Activated B cell treated with CpG ODN at 0.5 μM for 24 hours (primary cell): ENCODE measurements at regions of chr12 and their contacts with region 1.

Region 1: DNA sequence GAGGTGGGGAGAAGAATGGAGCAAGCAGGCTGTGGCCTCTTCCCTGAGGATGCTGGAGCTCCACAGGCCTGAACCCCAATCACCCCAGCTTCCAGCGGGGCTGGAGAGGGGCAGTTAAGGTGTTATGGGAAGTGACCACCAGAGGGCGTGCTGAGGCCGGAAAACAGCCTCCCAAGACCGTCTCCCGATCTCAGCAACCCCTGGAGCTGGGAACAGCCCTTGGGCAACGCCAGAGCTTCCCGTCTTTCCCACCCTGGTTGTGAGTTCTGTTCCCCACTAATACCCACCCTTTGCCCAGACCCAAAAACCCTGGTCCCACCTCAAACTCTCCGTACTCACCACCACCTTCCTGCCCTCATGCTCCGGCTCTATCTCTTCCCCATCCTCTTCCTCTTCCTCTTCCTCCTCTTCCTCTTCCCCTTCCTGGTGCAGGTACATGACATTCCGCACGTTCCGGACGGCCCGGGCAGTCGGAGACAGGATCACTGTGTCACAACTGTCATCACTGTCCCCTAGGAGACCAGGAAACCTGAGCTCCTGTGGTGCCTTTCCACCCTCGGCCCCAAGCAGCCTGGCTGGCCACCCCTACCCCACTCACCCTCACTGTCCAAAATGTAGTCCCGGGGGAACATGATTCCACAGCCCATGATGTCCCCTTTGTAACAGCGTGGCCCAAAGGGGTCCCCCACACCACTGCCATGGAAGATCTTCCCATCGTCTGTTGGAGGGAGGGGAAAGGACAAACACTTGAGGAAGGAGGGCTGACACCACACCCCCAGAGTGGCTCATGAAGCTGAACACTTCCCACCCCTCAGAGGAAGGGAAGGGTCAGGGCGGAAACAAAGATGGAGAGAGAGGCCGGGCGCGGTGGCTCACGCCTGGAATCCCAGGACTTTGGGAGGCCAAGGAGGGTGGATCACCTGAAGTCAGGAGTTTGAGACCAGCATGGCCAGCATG is 12.9 kb downstream of the SPRYD3 start:
- DNase-seq: peak; percentile 55
- ATAC-seq: peak; percentile 63
- H3K4me3 Mint-ChIP-seq: no peak overlapping the region
- H3K27ac Mint-ChIP-seq: no peak overlapping the region
- H3K4me1 Mint-ChIP-seq: peaks cover 10% of the 10 kb centered on the region
- H3K27me3 Mint-ChIP-seq: no peaks in the 10 kb centered on the region
- CTCF ChIP-seq: no peak

Region 2: GRCh38 chr12:53054112-53054833 is 12.0 kb before region 1 on chr12:
- CTCF ChIA-PET with region 1: interaction called, 11 read pairs
- POLR2A ChIA-PET with region 1: interaction called, 3 read pairs
- intact Hi-C with region 1: loop called (anchors 2 kb)
- DNase-seq: peak; percentile 86
- ATAC-seq: peak; percentile 97
- H3K4me3 Mint-ChIP-seq: peak overlapping the region; percentile 95
- H3K27ac Mint-ChIP-seq: peak overlapping the region; percentile 90
- H3K4me1 Mint-ChIP-seq: peaks cover 12% of the 10 kb centered on the region
- H3K27me3 Mint-ChIP-seq: peaks cover 6% of the 10 kb centered on the region
- CTCF ChIP-seq: no peak

Region 3: DNA sequence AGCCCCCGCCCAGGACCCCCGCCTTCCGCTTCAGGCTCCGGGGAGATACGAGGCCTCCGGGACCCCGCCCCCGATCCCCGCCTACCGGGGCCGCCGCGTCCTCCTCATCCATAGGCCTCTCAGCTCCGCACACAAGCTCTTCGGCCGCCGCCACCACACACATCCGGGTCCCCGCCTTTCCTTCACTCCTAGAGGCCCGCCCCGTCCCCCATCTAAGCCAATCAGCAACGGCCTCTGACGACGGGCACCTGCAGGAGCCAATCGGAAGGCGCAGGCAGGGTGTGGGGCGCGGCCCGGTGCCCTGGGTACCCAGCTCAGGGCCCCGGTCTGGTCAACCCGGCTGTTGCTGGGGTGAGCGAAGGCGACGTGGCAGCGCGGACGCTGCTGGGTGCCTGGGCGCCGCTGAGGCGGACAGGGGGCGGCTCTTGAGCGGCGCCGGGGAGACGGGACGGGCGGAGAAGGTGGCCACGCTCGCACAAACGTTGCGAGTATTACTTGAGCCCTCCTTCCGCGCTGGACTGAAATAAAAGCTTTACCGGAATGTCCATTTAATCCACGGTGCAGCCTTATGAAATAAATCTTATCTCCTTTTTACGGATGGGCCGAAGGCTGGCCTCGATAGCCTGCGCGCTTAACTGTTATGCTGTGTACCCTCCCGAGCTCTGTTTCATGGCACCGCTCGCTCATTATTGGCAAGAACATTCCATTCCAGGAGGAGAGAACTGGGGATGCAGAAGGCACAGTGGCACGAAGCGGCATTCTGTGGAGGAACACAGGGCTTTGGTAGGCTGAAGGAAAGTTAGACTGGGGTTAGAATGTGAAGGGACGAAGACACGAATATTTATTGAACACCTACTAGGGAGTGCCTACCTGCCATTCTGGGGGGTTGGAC is 13.2 kb after region 1 on chr12 and contains the start of gene SPRYD3:
- CTCF ChIA-PET with region 1: interaction called, 77 read pairs
- POLR2A ChIA-PET with region 1: interaction called, 7 read pairs
- intact Hi-C with region 1: no loop called
- DNase-seq: peak; percentile 98
- ATAC-seq: peak; percentile 98
- H3K4me3 Mint-ChIP-seq: peak within 1 kb of the TSS; percentile 92
- H3K27ac Mint-ChIP-seq: peak within 1 kb of the TSS; percentile 87
- H3K4me1 Mint-ChIP-seq: peaks cover 31% of the 10 kb centered on the region
- H3K27me3 Mint-ChIP-seq: no peaks in the 10 kb centered on the region
- CTCF ChIP-seq: no peak
- total RNA-seq, gene SPRYD3: 32.5 and 33.9 TPM in 2 replicates

Region 4: DNA sequence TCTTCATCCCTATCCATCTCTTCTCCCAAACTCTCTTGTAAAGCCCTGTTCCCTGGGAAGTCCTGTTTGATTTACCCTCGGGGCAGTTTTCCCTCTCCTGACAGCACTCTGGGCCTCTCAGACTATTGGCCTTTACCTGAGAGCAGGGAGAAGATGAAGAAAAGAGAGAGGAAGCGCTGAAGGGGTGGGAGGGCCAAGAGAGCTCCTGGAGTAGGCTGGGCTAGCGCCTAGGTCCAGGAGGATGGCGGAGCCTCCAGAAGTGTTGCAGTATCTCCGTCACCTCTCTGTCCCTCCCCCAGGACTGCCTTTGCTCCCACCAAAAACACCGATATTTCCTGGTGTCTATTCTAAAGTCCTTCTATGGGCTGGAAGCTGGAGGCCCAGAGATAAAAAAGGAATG is 25.5 kb after region 1 on chr12:
- CTCF ChIA-PET with region 1: interaction called, 133 read pairs
- POLR2A ChIA-PET with region 1: interaction called, 3 read pairs
- intact Hi-C with region 1: no loop called
- DNase-seq: no peak
- ATAC-seq: no peak
- H3K4me3 Mint-ChIP-seq: no peak overlapping the region
- H3K27ac Mint-ChIP-seq: no peak overlapping the region
- H3K4me1 Mint-ChIP-seq: peaks cover 3% of the 10 kb centered on the region
- H3K27me3 Mint-ChIP-seq: peaks cover 29% of the 10 kb centered on the region
- CTCF ChIP-seq: no peak

Region 5: GRCh38 chr12:53098982-53099651 is 32.9 kb after region 1 on chr12:
- CTCF ChIA-PET with region 1: interaction called, 133 read pairs
- POLR2A ChIA-PET with region 1: interaction called, 4 read pairs
- intact Hi-C with region 1: loop called (anchors 1 kb)
- DNase-seq: peak; percentile 75
- ATAC-seq: peak; percentile 66
- H3K4me3 Mint-ChIP-seq: peak overlapping the region; percentile 13
- H3K27ac Mint-ChIP-seq: no peak overlapping the region
- H3K4me1 Mint-ChIP-seq: peaks cover 34% of the 10 kb centered on the region
- H3K27me3 Mint-ChIP-seq: peaks cover 13% of the 10 kb centered on the region
- CTCF ChIP-seq: peak; percentile 99

Region 6: GRCh38 chr12:53190108-53190729 is 124.0 kb after region 1 on chr12:
- CTCF ChIA-PET with region 1: interaction called, 6 read pairs
- POLR2A ChIA-PET with region 1: interaction called, 3 read pairs
- intact Hi-C with region 1: loop called (anchors 2 kb)
- DNase-seq: no peak
- ATAC-seq: peak; percentile 89
- H3K4me3 Mint-ChIP-seq: no peak overlapping the region
- H3K27ac Mint-ChIP-seq: peak overlapping the region; percentile 31
- H3K4me1 Mint-ChIP-seq: peaks cover 8% of the 10 kb centered on the region
- H3K27me3 Mint-ChIP-seq: no peaks in the 10 kb centered on the region
- CTCF ChIP-seq: no peak

Region 7: GRCh38 chr12:53287741-53288216 is 221.5 kb after region 1 on chr12:
- CTCF ChIA-PET with region 1: interaction called, 10 read pairs
- POLR2A ChIA-PET with region 1: no interaction called
- intact Hi-C with region 1: loop called (anchors 1 kb)
- DNase-seq: peak; percentile 53
- ATAC-seq: peak; percentile 100
- H3K4me3 Mint-ChIP-seq: no peak overlapping the region
- H3K27ac Mint-ChIP-seq: no peak overlapping the region
- H3K4me1 Mint-ChIP-seq: peaks cover 4% of the 10 kb centered on the region
- H3K27me3 Mint-ChIP-seq: no peaks in the 10 kb centered on the region
- CTCF ChIP-seq: no peak